ENCODE measurements at regions of chr18 and their contacts with region 1.

Region 1: GRCh38 chr18:58043491-58044379 is at the start of gene NEDD4L:
- DNase-seq: peak; percentile 87
- H3K4me3 ChIP-seq: peak within 1 kb of the TSS; percentile 75 to 93 (median 77)
- H3K27ac ChIP-seq: peak within 1 kb of the TSS; percentile 72
- H3K4me1 ChIP-seq: peaks cover 16% of the 10 kb centered on the region
- H3K27me3 ChIP-seq: no peaks in the 10 kb centered on the region
- CTCF ChIP-seq: peak; percentile 79 to 91
- POLR2A ChIP-seq: no peak
- total RNA-seq, gene NEDD4L: 78.9 and 95.9 TPM in 2 replicates

Region 2: GRCh38 chr18:57630002-57630753 is 413.6 kb before region 1 on chr18:
- CTCF ChIA-PET with region 1: no interaction called
- POLR2A ChIA-PET with region 1: no interaction called
- dilution Hi-C with region 1: no loop called
- intact Hi-C with region 1: loop called (anchors 5 kb)
- DNase-seq: peak; percentile 94
- H3K4me3 ChIP-seq: peak overlapping the region; percentile 44 to 74 (median 55)
- H3K27ac ChIP-seq: peak overlapping the region; percentile 63
- H3K4me1 ChIP-seq: peaks cover 27% of the 10 kb centered on the region
- H3K27me3 ChIP-seq: no peaks in the 10 kb centered on the region
- CTCF ChIP-seq: peak; percentile 73 to 75
- POLR2A ChIP-seq: peak; percentile 37

Region 3: DNA sequence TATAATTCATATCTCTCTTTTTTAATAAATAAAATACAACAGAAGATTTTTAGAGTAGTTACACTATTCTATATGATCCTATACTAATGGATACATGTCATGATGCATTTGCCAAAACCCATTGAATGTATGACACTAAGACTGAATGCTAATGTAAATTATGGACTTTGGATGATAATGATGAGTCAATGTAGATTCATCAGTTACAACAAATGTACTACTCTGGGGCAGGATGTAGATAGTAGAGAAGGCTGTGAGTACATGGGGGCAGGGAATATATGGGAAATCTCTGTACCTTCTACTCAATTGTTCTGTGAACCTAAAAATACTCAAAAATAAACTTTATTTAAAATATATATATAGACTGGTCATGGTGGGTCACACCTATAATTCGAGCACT is 45.3 kb before region 1 on chr18:
- CTCF ChIA-PET with region 1: no interaction called
- POLR2A ChIA-PET with region 1: no interaction called
- dilution Hi-C with region 1: no loop called
- intact Hi-C with region 1: no loop called
- DNase-seq: no peak
- H3K4me3 ChIP-seq: no peak overlapping the region
- H3K27ac ChIP-seq: no peak overlapping the region
- H3K4me1 ChIP-seq: no peaks in the 10 kb centered on the region
- H3K27me3 ChIP-seq: peaks cover 0 to 4% of the 10 kb centered on the region in 2 experiments
- CTCF ChIP-seq: no peak
- POLR2A ChIP-seq: no peak

Region 4: DNA sequence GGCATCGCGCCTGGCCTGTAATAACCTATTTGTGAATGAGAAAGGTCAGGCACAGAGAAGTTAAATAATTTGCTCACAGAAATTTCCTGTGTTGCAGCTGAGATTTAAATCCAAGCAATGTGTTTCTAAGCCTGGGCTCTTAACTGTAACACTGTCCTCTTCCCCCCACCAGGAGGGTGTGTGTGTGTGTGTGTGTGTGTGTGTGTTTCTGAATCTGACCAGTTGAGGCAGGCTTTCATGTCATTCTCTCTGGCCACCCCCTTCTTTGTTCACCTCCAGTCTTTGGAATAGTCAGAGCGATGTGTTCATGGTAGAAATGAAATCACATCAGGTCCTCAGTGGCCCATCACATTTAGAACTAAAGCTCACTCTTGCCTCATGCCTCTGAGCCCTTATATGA is 81.4 kb after region 1 on chr18:
- CTCF ChIA-PET with region 1: interaction called, 144 read pairs
- POLR2A ChIA-PET with region 1: no interaction called
- dilution Hi-C with region 1: no loop called
- intact Hi-C with region 1: loop called (anchors 1 kb)
- DNase-seq: no peak
- H3K4me3 ChIP-seq: no peak overlapping the region
- H3K27ac ChIP-seq: no peak overlapping the region
- H3K4me1 ChIP-seq: no peaks in the 10 kb centered on the region
- H3K27me3 ChIP-seq: no peaks in the 10 kb centered on the region
- CTCF ChIP-seq: no peak
- POLR2A ChIP-seq: no peak

Region 5: DNA sequence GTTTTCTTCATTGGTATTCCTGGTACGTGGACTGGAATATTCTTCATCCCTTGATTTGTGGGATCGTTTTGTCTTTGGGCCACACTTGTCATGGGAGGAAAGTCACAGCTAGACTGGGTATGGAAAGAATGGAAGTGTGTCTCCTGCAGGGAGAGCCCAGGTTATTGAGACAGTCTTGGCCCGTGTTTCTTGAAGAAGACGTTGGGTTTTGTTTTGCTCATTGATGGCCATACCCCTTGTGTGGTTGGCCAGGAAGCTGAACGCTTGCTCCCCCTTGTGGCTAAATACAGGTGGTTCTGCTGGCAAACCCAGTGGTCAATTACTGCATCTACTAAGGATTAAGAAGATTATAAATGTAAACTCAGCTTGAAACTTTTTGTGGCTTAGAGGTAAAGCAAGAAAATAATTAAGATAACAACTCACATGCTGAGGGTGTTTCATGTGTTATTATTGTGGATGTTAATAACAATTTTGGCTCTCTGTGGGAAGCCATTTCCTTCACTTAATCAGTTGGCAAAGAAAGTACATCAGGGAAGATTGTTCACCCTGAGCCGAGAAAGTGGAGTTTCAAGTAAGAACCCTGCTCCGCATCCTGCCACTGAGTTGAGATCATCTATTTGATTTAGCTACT is 92.1 kb after region 1 on chr18:
- CTCF ChIA-PET with region 1: interaction called, 28 read pairs
- POLR2A ChIA-PET with region 1: no interaction called
- dilution Hi-C with region 1: no loop called
- intact Hi-C with region 1: loop called (anchors 1 kb)
- DNase-seq: peak; percentile 69
- H3K4me3 ChIP-seq: no peak overlapping the region
- H3K27ac ChIP-seq: no peak overlapping the region
- H3K4me1 ChIP-seq: peaks cover 2% of the 10 kb centered on the region
- H3K27me3 ChIP-seq: no peaks in the 10 kb centered on the region
- CTCF ChIP-seq: peak; percentile 85 to 91
- POLR2A ChIP-seq: no peak

Region 6: GRCh38 chr18:58180738-58181353 is 137.1 kb after region 1 on chr18:
- CTCF ChIA-PET with region 1: interaction called, 13 read pairs
- POLR2A ChIA-PET with region 1: no interaction called
- dilution Hi-C with region 1: no loop called
- intact Hi-C with region 1: loop called (anchors 1 kb)
- DNase-seq: peak; percentile 67
- H3K4me3 ChIP-seq: no peak overlapping the region
- H3K27ac ChIP-seq: no peak overlapping the region
- H3K4me1 ChIP-seq: peaks cover 24% of the 10 kb centered on the region
- H3K27me3 ChIP-seq: no peaks in the 10 kb centered on the region
- CTCF ChIP-seq: peak; percentile 75 to 77
- POLR2A ChIP-seq: no peak

Region 7: DNA sequence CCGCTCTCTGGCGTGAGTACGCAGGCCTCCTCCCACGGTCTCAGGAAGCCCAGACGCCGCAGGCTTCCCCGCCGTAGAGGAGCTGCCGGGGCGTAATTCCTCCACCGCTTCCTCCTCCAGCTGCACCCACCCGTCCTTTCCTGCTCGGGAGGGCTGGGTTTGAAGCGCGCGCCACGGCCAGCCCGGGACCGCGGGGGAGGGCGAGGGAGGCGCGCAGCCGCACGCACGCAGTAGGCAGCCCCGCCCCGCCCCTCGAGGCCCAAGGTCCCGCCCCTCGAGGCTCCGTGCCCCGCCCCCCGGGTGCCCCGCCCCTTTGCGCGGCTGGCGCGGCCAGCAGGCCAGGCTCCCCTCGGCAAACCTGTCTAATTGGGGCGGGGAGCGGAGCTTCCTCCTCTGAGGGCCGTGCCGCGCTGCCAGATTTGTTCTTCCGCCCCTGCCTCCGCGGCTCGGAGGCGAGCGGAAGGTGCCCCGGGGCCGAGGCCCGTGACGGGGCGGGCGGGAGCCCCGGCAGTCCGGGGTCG is 627.4 kb after region 1 on chr18 and contains the start of gene MALT1:
- CTCF ChIA-PET with region 1: no interaction called
- POLR2A ChIA-PET with region 1: no interaction called
- dilution Hi-C with region 1: no loop called
- intact Hi-C with region 1: loop called (anchors 5 kb)
- DNase-seq: peak; percentile 85
- H3K4me3 ChIP-seq: peak within 1 kb of the TSS; percentile 60 to 72 (median 64)
- H3K27ac ChIP-seq: peak within 1 kb of the TSS; percentile 36
- H3K4me1 ChIP-seq: peaks cover 25% of the 10 kb centered on the region
- H3K27me3 ChIP-seq: peaks cover 5% of the 10 kb centered on the region in 2 experiments
- CTCF ChIP-seq: no peak
- POLR2A ChIP-seq: peak; percentile 50
- total RNA-seq, gene MALT1: 5.1 and 8.8 TPM in 2 replicates

Measured in endothelial cell of umbilical vein (primary cell).